ENCODE measurements at regions of chr1 and their contacts with region 1.

Region 1: DNA sequence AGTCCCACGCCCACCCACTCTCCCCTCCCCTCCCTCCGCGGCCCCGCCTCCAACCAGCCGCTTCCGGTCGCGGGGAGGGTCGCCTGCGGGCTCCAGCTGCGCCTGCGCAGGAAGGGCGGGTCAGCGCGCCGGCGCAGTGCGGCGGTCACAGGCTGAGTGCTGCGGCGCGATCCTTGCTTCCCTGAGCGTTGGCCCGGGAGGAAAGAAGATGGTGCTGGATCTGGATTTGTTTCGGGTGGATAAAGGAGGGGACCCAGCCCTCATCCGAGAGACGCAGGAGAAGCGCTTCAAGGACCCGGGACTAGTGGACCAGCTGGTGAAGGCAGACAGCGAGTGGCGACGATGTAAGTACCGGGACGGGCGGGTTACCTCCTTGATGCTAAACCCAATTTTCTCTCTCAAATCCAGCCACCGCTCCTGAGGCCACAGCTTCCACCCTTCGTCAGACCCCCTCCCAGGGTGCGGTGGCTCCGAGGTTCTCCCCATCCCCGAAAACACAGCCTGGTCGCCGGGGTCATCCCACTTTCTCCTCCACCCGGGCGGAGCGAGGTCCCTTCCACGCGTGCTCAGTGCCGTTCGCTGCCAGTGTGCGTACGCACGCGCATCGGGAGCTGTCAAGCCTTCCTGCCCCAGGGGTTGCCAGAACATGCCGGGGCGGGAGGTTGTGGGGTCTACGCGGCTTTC is at the start of gene SARS1:
- DNase-seq: peak; percentile 93
- ATAC-seq: peak; percentile 84
- H3K4me3 Mint-ChIP-seq: peak within 1 kb of the TSS; percentile 100
- H3K27ac Mint-ChIP-seq: peak within 1 kb of the TSS; percentile 98
- H3K4me1 Mint-ChIP-seq: peaks cover 39% of the 10 kb centered on the region
- H3K27me3 Mint-ChIP-seq: no peaks in the 10 kb centered on the region
- CTCF ChIP-seq: no peak
- total RNA-seq, gene SARS1: 182 and 188 TPM in 2 replicates

Region 2: DNA sequence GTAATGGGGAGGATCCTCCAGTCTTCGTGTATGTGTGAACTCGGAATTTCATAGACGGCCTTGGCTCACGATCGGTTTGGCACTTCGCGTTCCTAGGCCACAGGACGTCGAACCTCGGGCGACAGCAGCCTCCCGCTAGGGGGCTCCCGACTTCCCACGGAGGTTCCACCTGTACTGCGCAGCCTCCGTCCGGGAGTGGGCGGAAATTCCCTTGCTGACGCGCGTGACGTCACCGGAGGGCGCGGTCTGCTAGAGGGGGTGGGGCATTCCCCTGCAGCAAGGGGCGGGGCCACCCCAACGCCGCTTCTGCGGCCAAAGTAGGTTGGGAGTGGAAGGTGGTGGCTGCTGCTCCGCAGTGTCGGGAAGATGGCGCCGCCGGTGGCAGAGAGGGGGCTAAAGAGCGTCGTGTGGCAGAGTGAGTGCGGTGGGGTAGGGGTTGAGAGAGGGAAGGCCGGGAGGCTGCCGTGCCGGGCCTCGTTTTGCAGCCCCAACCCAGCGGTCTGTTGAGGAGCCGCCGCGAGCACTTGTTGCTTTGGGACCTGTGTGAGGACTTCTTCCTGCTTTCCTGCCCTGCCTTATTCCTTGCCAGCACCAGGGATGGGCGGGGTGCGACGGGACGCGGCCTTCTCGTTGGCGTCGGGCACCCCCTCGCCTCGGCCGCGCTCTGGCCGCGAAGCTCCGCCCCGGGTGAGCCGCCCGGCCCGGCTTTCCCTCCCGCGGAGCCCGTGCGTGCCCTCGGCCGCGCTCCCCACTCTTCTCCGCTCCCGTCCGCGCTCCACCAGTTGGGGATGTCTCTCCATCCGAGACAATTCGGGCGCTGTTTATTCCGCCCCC is 467.3 kb before region 1 on chr1 and contains the start of gene STXBP3:
- CTCF ChIA-PET with region 1: no interaction called
- POLR2A ChIA-PET with region 1: no interaction called
- intact Hi-C with region 1: loop called (anchors 2 kb)
- DNase-seq: peak; percentile 99
- ATAC-seq: peak; percentile 92
- H3K4me3 Mint-ChIP-seq: peak within 1 kb of the TSS; percentile 99
- H3K27ac Mint-ChIP-seq: peak within 1 kb of the TSS; percentile 99
- H3K4me1 Mint-ChIP-seq: peaks cover 28% of the 10 kb centered on the region
- H3K27me3 Mint-ChIP-seq: no peaks in the 10 kb centered on the region
- CTCF ChIP-seq: peak; percentile 93
- total RNA-seq, gene STXBP3: 46.4 and 50.2 TPM in 2 replicates

Region 3: DNA sequence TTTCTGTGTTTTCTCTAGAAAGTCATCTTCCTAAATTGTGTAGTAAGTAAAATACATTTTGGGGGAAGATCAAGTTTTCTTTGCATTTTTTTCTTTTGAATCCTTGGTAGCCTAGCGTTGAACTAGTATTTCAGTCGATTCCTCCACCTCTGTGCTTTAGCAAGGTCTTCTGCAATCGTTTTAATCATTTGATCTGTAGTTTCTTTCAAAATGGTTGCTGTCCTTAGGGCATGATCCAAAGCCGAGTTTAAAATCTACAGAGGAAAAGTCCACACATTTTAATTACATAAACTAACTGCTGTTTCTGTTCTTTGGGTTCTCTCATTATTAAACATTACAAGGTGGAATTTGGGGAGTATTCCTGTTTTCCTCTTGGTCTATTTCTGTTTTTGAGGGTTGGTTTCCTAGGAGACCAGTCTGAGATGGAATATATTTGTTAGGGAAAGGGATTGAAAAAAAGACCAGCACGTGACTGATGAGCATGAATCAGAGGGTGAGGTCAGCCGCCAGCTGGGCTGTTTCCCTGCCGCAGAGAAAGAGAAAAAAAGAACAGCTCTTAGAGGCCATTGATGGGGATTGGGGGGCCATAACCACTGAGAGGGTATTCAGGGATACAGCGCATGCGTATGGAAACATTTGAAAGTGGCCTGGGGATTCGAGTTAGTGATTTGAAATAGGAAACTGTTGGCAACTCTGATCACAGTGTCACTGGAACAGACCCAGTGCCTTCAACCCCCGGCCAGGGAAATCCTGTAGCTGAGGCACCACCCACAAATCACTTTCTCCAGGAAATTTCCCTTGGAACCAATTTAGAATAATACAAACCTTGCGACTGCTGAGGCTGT is 397.7 kb before region 1 on chr1:
- CTCF ChIA-PET with region 1: no interaction called
- POLR2A ChIA-PET with region 1: no interaction called
- intact Hi-C with region 1: no loop called
- DNase-seq: no peak
- ATAC-seq: no peak
- H3K4me3 Mint-ChIP-seq: no peak overlapping the region
- H3K27ac Mint-ChIP-seq: no peak overlapping the region
- H3K4me1 Mint-ChIP-seq: no peaks in the 10 kb centered on the region
- H3K27me3 Mint-ChIP-seq: peaks cover 3% of the 10 kb centered on the region
- CTCF ChIP-seq: no peak

Region 4: GRCh38 chr1:109041621-109042468 is 172.1 kb before region 1 on chr1 and contains the start of gene WDR47:
- CTCF ChIA-PET with region 1: no interaction called
- POLR2A ChIA-PET with region 1: interaction called, 11 read pairs
- intact Hi-C with region 1: loop called (anchors 1 kb)
- DNase-seq: peak; percentile 89
- ATAC-seq: peak; percentile 96
- H3K4me3 Mint-ChIP-seq: peak within 1 kb of the TSS; percentile 88
- H3K27ac Mint-ChIP-seq: peak within 1 kb of the TSS; percentile 60
- H3K4me1 Mint-ChIP-seq: peaks cover 15% of the 10 kb centered on the region
- H3K27me3 Mint-ChIP-seq: no peaks in the 10 kb centered on the region
- CTCF ChIP-seq: no peak
- total RNA-seq, gene WDR47: 10.3 and 10.9 TPM in 2 replicates

Region 5: GRCh38 chr1:109099938-109100773 is 113.8 kb before region 1 on chr1:
- CTCF ChIA-PET with region 1: interaction called, 4 read pairs
- POLR2A ChIA-PET with region 1: interaction called, 58 read pairs
- intact Hi-C with region 1: loop called (anchors 1 kb)
- DNase-seq: peak; percentile 93
- ATAC-seq: peak; percentile 88
- H3K4me3 Mint-ChIP-seq: peak overlapping the region; percentile 95
- H3K27ac Mint-ChIP-seq: peak overlapping the region; percentile 98
- H3K4me1 Mint-ChIP-seq: peaks cover 19% of the 10 kb centered on the region
- H3K27me3 Mint-ChIP-seq: no peaks in the 10 kb centered on the region
- CTCF ChIP-seq: peak; percentile 37

Region 6: GRCh38 chr1:109193653-109194590 is 20.0 kb before region 1 on chr1:
- CTCF ChIA-PET with region 1: no interaction called
- POLR2A ChIA-PET with region 1: interaction called, 3 read pairs
- intact Hi-C with region 1: loop called (anchors 1 kb)
- DNase-seq: peak; percentile 47
- ATAC-seq: peak; percentile 97
- H3K4me3 Mint-ChIP-seq: peak overlapping the region; percentile 19
- H3K27ac Mint-ChIP-seq: no peak overlapping the region
- H3K4me1 Mint-ChIP-seq: peaks cover 14% of the 10 kb centered on the region
- H3K27me3 Mint-ChIP-seq: no peaks in the 10 kb centered on the region
- CTCF ChIP-seq: no peak

Region 7: GRCh38 chr1:109282952-109283747 is 69.2 kb after region 1 on chr1 and contains the start of gene PSRC1:
- CTCF ChIA-PET with region 1: no interaction called
- POLR2A ChIA-PET with region 1: interaction called, 5 read pairs
- intact Hi-C with region 1: loop called (anchors 1 kb)
- DNase-seq: peak; percentile 88
- ATAC-seq: peak; percentile 98
- H3K4me3 Mint-ChIP-seq: peak within 1 kb of the TSS; percentile 96
- H3K27ac Mint-ChIP-seq: peak within 1 kb of the TSS; percentile 91
- H3K4me1 Mint-ChIP-seq: peaks cover 13% of the 10 kb centered on the region
- H3K27me3 Mint-ChIP-seq: peaks cover 3% of the 10 kb centered on the region
- CTCF ChIP-seq: no peak
- total RNA-seq, gene PSRC1: 0.69 TPM in 1 of 2 replicates, not detected in the other

Region 8: GRCh38 chr1:109483672-109484518 is 270.0 kb after region 1 on chr1 and contains the start of gene ATXN7L2:
- CTCF ChIA-PET with region 1: no interaction called
- POLR2A ChIA-PET with region 1: interaction called, 15 read pairs
- intact Hi-C with region 1: no loop called
- DNase-seq: peak; percentile 90
- ATAC-seq: peak; percentile 79
- H3K4me3 Mint-ChIP-seq: peak within 1 kb of the TSS; percentile 94
- H3K27ac Mint-ChIP-seq: peak within 1 kb of the TSS; percentile 91
- H3K4me1 Mint-ChIP-seq: peaks cover 27% of the 10 kb centered on the region
- H3K27me3 Mint-ChIP-seq: peaks cover 16% of the 10 kb centered on the region
- CTCF ChIP-seq: no peak
- total RNA-seq, gene ATXN7L2: 7.5 and 9.0 TPM in 2 replicates

Measured in activated B cell treated with CpG ODN at 0.5 μM for 24 hours (primary cell).